ENCODE measurements at regions of chr14 and their contacts with region 1.

Region 1: DNA sequence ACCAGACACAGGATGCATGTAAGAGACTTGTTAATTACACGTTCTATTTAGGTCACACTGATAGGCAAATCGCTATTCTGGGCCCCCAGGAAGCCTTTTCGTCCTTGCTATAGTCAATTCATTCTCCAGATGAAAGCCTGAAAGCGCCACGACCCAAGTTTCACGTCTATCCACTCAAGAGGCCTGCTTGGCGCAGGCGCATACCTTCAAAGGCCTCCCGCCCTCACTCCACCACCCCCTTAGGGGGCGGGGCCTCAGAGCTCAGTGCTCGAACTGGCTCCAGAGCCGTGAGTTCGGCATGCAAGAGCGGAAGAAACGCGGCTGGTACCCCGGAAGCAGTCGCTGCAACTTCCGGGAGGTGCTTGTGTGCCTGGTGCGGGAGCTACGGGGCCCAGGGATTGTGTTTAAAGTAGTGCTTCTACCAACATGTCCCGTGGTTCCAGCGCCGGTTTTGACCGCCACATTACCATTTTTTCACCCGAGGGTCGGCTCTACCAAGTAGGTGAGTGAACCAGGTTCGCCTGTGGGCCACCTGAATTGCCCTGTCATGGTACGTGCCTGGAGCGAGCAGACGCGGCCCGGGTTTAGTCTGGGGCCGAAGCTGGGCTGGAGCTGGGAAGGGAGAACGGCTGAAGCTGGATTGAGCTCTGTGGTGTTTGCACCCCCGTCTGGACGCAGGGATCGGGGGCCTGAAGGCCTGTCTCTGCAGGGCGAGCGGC is at the start of gene PSMA6:
- DNase-seq: peak; percentile 99
- H3K4me3 Mint-ChIP-seq: peak within 1 kb of the TSS; percentile 98
- H3K27ac Mint-ChIP-seq: peak within 1 kb of the TSS; percentile 97
- H3K4me1 Mint-ChIP-seq: peaks cover 53% of the 10 kb centered on the region
- H3K27me3 Mint-ChIP-seq: no peaks in the 10 kb centered on the region
- total RNA-seq, gene PSMA6: 433 to 437 TPM

Region 2: DNA sequence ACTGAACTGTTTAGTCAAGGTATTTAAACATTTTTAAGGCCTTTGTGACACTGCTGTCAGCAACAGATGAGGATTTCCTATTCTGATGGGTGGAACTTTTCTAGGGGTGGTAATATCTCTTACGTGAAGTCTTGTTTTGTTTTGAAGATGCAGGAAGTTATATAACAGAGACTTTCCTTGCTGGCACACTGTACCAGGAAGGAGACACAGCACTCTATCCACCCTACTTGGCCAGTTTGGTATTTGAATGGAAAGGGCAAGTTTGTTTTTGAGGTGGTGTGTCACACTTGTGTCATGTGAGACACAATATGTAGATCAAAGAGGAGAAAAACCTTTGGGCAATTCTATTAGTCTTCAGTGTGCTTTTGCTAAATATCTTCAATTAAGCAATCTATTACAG is 361.0 kb before region 1 on chr14:
- CTCF ChIA-PET with region 1: no interaction called
- intact Hi-C with region 1: loop called (anchors 2 kb)
- DNase-seq: peak; percentile 56
- H3K4me3 Mint-ChIP-seq: peak overlapping the region; percentile 64
- H3K27ac Mint-ChIP-seq: peak overlapping the region; percentile 93
- H3K4me1 Mint-ChIP-seq: peaks cover 49% of the 10 kb centered on the region
- H3K27me3 Mint-ChIP-seq: no peaks in the 10 kb centered on the region

Region 3: GRCh38 chr14:34993426-34993825 is 298.8 kb before region 1 on chr14:
- CTCF ChIA-PET with region 1: no interaction called
- intact Hi-C with region 1: no loop called
- DNase-seq: no peak
- H3K4me3 Mint-ChIP-seq: no peak overlapping the region
- H3K27ac Mint-ChIP-seq: no peak overlapping the region
- H3K4me1 Mint-ChIP-seq: peaks cover 39% of the 10 kb centered on the region
- H3K27me3 Mint-ChIP-seq: no peaks in the 10 kb centered on the region

Region 4: DNA sequence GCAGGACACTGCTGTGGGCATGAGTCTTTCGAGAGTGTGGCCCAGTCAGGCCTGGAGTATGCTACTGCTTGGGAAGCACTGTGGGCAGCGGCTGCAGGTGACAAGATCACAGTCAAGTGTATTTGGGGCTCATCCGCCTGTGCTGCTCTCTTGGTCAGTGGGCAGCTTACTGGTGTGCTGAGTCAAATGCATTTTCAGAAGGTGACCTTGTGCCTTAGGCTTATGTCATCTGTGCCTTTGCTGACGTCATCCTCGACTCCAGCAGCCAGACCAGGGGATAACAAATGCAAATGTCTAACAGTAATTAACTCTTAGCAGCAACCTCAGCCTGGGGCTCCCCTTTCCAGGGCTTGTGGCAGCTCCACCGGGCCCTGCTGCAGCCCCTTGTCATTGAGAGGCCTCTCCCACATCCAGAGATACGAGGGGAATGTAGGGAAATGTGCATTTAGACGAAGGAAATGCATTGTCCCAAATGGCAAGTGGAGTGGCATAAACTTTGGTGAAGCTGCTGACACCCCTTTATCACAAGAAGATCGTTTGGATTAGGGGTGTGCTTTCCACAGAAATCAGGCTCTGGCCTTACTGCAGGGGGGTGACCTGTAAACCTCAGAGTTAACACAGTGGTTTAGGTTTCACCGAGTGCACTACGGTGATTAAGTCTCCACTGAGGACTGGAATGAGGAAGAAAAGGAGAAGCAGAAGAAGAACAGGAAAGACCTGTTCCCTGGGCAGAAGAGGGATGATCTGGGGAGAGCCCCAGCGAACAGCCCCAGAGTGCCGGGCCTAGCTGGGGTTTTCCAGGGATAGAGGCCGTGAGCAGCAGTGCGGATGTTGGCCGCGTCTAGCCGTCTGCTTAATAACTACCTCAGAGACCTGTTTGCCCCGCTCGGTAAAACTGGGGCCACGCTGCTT is 39.7 kb after region 1 on chr14:
- CTCF ChIA-PET with region 1: interaction called, 3 read pairs
- intact Hi-C with region 1: loop called (anchors 1 kb)
- DNase-seq: no peak
- H3K4me3 Mint-ChIP-seq: no peak overlapping the region
- H3K27ac Mint-ChIP-seq: peak overlapping the region; percentile 94
- H3K4me1 Mint-ChIP-seq: peaks cover 32% of the 10 kb centered on the region
- H3K27me3 Mint-ChIP-seq: no peaks in the 10 kb centered on the region

Region 5: DNA sequence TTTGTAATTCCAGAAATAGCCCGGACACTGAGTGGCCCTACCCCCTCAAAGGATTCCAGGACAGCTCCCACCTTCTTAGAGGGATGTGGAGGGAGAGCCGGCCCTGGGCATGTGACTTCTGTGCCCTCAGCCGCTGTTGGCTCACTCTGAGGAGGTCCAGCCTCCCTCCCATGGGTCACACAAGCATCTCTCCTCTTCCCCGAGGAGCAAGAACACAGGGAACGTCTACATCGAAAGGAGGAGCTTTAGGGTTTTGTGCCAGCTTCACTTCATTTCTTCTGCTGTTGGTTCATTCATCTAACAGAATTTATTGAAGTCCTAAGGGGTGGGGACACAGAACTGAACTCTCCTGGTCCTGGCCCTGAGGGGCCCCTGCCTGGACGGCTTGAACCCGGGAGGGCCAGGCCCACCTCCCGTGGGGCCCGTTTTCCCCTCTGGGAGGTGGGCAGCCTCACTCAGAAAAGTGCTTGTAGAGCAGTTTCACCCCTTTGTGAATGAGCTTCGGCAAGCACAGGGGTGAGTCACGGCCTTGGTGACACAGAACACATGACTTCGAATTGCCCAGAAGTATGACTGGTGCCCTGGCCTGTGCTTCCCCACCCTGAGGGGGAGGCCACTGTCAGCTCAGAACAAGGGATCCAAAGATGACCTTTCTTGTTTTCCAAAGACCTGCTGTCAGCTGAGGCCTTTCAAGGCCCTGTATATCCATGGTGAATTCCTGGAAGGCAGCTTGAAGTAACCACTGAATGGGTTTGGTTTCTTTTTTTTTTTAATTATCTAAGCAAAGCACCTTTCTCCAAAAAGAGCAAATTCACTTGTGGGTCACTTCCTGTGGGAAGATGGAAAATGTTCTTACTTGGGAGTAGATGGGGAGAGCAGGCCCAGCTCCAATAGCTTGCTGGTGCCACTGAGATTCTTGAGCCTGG is 73.2 kb after region 1 on chr14:
- CTCF ChIA-PET with region 1: no interaction called
- intact Hi-C with region 1: loop called (anchors 1 kb)
- DNase-seq: peak; percentile 94
- H3K4me3 Mint-ChIP-seq: no peak overlapping the region
- H3K27ac Mint-ChIP-seq: peak overlapping the region; percentile 92
- H3K4me1 Mint-ChIP-seq: peaks cover 60% of the 10 kb centered on the region
- H3K27me3 Mint-ChIP-seq: no peaks in the 10 kb centered on the region

Region 6: DNA sequence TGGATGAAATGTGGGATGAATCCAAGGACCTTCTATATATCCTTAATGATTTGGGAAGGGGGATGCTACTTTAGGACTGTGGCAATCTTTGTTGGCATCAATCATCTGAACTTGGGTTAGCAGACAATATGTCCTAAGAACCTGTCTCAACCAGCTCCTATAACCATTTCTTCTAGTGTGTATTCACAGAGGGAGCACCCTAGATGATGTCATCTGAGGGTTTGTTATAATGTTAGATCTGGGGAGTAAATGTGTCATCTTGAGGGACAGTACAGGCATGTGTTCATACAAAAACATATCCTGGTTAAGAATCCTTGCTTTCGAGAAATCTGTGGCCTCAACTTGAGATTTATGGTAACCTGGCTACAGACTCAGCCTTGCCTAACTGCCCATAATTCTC is 154.2 kb after region 1 on chr14:
- CTCF ChIA-PET with region 1: no interaction called
- intact Hi-C with region 1: no loop called
- DNase-seq: no peak
- H3K4me3 Mint-ChIP-seq: no peak overlapping the region
- H3K27ac Mint-ChIP-seq: no peak overlapping the region
- H3K4me1 Mint-ChIP-seq: no peaks in the 10 kb centered on the region
- H3K27me3 Mint-ChIP-seq: no peaks in the 10 kb centered on the region

Region 7: GRCh38 chr14:35808076-35808652 is 516.0 kb after region 1 on chr14:
- CTCF ChIA-PET with region 1: no interaction called
- intact Hi-C with region 1: loop called (anchors 5 kb)
- DNase-seq: peak; percentile 61
- H3K4me3 Mint-ChIP-seq: peak overlapping the region; percentile 98
- H3K27ac Mint-ChIP-seq: peak overlapping the region; percentile 86
- H3K4me1 Mint-ChIP-seq: peaks cover 28% of the 10 kb centered on the region
- H3K27me3 Mint-ChIP-seq: no peaks in the 10 kb centered on the region